ENCODE measurements at regions of chr5 and their contacts with region 1.

Region 1: DNA sequence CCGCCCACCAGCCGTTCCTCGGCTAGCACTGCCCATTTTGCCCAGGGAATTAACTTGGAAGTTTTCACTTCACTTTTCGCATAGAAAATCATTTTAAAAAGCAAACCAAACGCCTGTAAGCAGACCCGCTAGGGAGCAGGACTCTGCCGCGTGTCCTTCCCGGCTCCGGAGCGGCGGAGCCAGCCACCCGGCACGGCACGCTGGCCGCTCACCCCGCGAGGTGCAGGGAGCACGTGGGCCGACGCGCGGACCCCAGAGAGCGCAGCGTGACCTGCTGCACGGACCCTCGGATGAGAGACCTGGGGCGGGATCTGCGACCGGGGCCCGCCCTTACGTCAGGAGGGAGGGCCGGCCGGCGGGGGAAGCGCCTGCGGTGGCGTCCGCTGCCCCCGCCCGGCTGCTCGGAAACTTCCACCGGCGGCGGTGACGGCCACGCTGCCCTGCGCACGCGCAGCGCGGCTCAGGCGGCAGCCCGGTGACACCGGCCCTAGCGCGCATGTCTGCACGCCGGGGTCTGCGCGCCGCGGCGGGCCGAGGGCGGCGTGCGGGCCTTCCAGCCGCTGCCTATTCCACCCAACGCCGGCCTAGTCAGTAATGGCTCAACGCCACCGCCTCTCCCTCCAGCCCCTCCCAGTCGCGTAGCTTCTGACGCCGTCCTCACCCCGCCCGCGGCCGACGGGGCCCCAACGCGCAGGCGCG is 506 bp upstream of the TENT4A start:
- DNase-seq: peak in 9 of 14 experiments; percentile 94 to 99 (median 97)
- ATAC-seq: peak; percentile 71
- H3K4me3 ChIP-seq: peak overlapping the region; percentile 91
- H3K4me3 Mint-ChIP-seq: peak overlapping the region; percentile 95
- H3K27ac ChIP-seq: peak overlapping the region; percentile 72 to 84
- H3K27ac Mint-ChIP-seq: peak overlapping the region; percentile 78
- H3K4me1 ChIP-seq: peaks cover 34% of the 10 kb centered on the region
- H3K4me1 Mint-ChIP-seq: peaks cover 40% of the 10 kb centered on the region
- H3K27me3 ChIP-seq: no peaks in the 10 kb centered on the region
- H3K27me3 Mint-ChIP-seq: no peaks in the 10 kb centered on the region
- CTCF ChIP-seq: no peak

Region 2: GRCh38 chr5:5492087-5492933 is 1220.4 kb before region 1 on chr5:
- CTCF ChIA-PET with region 1: no interaction called
- POLR2A ChIA-PET with region 1: no interaction called
- intact Hi-C with region 1: loop called in 1 of 2 experiments (anchors 10 kb)
- DNase-seq: peak in 10 of 14 experiments; percentile 8 to 81 (median 28)
- ATAC-seq: peak; percentile 41
- H3K4me3 ChIP-seq: no peak overlapping the region
- H3K4me3 Mint-ChIP-seq: peak overlapping the region; percentile 69
- H3K27ac ChIP-seq: no peak overlapping the region
- H3K27ac Mint-ChIP-seq: no peak overlapping the region
- H3K4me1 ChIP-seq: peaks cover 21% of the 10 kb centered on the region
- H3K4me1 Mint-ChIP-seq: peaks cover 18% of the 10 kb centered on the region
- H3K27me3 ChIP-seq: no peaks in the 10 kb centered on the region
- H3K27me3 Mint-ChIP-seq: peaks cover 16% of the 10 kb centered on the region
- CTCF ChIP-seq: peak; percentile 64

Region 3: DNA sequence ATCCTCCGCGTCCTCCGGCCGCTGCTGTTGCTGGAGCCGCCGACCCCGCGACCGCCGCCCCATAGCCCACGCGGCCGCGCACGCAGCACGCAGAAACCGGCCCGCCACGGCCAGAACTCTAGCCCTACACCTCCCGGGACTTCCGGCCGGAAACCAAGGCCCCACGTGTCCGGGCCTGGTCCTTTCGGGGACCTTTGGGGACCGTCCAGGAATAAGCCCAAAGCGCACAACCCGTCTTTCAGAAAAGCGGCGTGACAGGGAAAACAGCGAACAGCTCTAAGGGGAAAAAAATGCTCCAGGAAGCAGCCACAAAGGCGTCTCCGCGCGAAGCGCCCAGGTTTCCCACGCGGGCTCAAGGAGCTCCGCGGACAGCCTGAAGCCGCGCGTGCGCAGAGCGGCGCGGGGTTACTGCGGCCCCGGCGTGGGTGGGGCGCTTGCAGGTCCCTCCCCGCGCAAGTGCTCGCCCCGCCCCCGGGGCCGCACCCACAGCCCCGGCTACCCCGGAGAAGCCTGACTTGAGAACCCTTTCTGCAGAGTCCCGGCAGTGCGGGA is 79.7 kb before region 1 on chr5 and contains the starts of genes NSUN2 and SRD5A1:
- CTCF ChIA-PET with region 1: interaction called, 5 read pairs
- POLR2A ChIA-PET with region 1: interaction called, 32 read pairs
- intact Hi-C with region 1: loop called (anchors 1 kb)
- DNase-seq: peak; percentile 78 to 97 (median 90)
- ATAC-seq: peak; percentile 88
- H3K4me3 ChIP-seq: peak within 1 kb of the TSS; percentile 87
- H3K4me3 Mint-ChIP-seq: peak within 1 kb of the TSS; percentile 90
- H3K27ac ChIP-seq: peak within 1 kb of the TSS; percentile 62 to 98
- H3K27ac Mint-ChIP-seq: peak within 1 kb of the TSS; percentile 93
- H3K4me1 ChIP-seq: peaks cover 33% of the 10 kb centered on the region
- H3K4me1 Mint-ChIP-seq: peaks cover 53% of the 10 kb centered on the region
- H3K27me3 ChIP-seq: no peaks in the 10 kb centered on the region
- H3K27me3 Mint-ChIP-seq: no peaks in the 10 kb centered on the region
- CTCF ChIP-seq: no peak
- total RNA-seq, gene NSUN2: 48.3 to 50.8 TPM
- total RNA-seq, gene SRD5A1: 2.3 to 3.0 TPM

Region 4: DNA sequence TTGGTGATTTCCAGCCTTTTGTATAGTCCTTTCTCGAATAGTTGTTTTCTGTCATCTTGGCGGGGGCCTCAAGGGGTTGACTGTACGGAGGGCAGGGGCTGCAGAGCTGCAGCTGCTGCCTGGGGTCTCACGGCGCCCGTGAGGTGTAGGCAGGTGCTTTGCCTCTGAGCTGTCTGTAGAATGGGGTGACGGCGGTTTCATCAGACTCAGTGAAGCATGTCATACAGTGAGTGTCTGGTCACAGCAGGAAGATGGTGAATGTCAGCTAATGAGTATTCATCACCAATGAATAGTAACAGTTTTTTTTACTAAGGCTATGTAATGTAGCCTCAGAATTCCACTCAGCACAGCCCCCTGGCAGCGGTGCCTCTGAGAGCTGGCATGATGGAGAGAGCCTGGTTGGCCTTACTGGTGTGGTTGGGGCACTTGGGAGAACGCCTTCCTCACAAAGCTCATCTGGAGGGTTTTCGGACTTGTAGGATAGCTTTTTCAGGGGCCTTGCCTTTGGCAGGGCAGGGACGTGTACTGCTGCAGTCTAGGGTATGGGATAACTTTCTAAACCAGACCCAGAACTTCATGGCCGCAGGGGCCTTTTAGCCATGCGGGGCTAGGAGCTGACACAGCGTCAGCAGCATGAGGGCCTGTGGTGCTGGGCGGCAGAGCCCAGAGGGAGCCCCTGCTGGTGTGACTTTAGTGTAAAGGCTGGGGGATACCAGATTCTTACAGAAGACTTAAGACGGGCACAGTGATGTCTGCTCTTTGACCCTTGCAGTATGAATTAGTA is 15.5 kb after region 1 on chr5:
- CTCF ChIA-PET with region 1: interaction called, 3 read pairs
- POLR2A ChIA-PET with region 1: interaction called, 12 read pairs
- intact Hi-C with region 1: loop called in 1 of 2 experiments (anchors 2 kb)
- DNase-seq: no peak
- ATAC-seq: no peak
- H3K4me3 ChIP-seq: no peak overlapping the region
- H3K4me3 Mint-ChIP-seq: no peak overlapping the region
- H3K27ac ChIP-seq: no peak overlapping the region
- H3K27ac Mint-ChIP-seq: peak overlapping the region; percentile 21
- H3K4me1 ChIP-seq: peaks cover 81% of the 10 kb centered on the region
- H3K4me1 Mint-ChIP-seq: peaks cover 94% of the 10 kb centered on the region
- H3K27me3 ChIP-seq: no peaks in the 10 kb centered on the region
- H3K27me3 Mint-ChIP-seq: no peaks in the 10 kb centered on the region
- CTCF ChIP-seq: no peak

Region 5: DNA sequence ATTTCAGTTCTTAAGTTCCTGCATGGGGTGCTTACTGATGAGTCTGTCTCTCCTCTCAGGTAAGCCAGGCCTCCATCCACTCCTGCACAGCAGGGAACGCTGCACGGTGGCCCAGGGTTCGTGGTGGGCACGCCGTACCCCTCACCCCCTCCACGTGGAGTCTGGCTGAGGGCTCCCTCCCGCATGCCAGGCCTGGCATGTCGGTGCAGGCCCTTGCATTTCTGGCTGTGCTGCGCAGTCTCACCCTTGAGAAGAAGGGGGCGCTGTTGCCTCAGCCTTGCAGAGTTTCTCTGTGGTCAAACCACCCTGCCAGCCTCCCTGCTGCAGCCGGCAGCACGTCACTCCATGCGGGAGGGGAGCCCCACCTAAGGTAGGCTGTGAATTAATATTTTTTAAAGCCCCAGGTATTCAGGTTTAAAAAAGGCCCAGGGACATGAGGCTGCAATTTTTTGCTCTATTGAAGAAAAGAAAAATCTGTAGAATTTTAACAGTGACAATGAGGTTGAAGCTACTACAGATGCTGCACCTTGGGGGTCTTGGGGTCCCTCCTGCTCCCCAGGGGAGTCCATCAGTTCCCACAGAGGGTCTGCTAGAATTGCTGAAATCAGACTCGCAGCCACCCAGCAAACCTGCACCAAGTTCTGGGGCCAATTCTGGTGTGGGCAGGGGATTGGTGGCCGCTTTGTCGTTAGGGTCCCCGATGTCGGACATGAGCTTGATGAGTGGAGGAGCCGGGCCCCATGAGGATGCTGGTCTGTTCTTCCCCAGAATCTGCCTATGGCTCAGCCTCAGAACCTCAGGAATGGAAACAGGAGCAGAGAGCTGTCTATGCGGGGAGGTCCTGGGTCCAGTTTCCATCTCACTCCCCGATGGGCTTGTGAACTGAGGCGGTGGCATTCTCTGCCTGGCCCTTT is 53.1 kb after region 1 on chr5:
- CTCF ChIA-PET with region 1: no interaction called
- POLR2A ChIA-PET with region 1: no interaction called
- intact Hi-C with region 1: no loop called
- DNase-seq: peak; percentile 41 to 79 (median 51)
- ATAC-seq: peak; percentile 83
- H3K4me3 ChIP-seq: no peak overlapping the region
- H3K4me3 Mint-ChIP-seq: no peak overlapping the region
- H3K27ac ChIP-seq: no peak overlapping the region
- H3K27ac Mint-ChIP-seq: no peak overlapping the region
- H3K4me1 ChIP-seq: peaks cover 14% of the 10 kb centered on the region
- H3K4me1 Mint-ChIP-seq: no peaks in the 10 kb centered on the region
- H3K27me3 ChIP-seq: no peaks in the 10 kb centered on the region
- H3K27me3 Mint-ChIP-seq: no peaks in the 10 kb centered on the region
- CTCF ChIP-seq: peak; percentile 59

Measured in CD4-positive, alpha-beta T cell (primary cell).